Activated CD4-positive, alpha-beta T cell treated with anti-CD3 and anti-CD28 coated beads, Interleukin-2, amount 10 ng/mL, durations not matched to agents 7 days and 5 days (primary cell): ENCODE measurements at regions of chr1 and their contacts with region 1.

Region 1: GRCh38 chr1:151131701-151132334 is 14.6 kb downstream of the SEMA6C start:
- DNase-seq: no peak
- H3K4me3 Mint-ChIP-seq: peak overlapping the region; percentile 60
- H3K27ac Mint-ChIP-seq: peak overlapping the region; percentile 81
- H3K4me1 Mint-ChIP-seq: peaks cover 21% of the 10 kb centered on the region
- H3K27me3 Mint-ChIP-seq: peaks cover 9% of the 10 kb centered on the region

Region 2: GRCh38 chr1:151098126-151098525 is 33.7 kb before region 1 on chr1:
- CTCF ChIA-PET with region 1: interaction called, 11 read pairs
- POLR2A ChIA-PET with region 1: no interaction called
- DNase-seq: no peak
- H3K4me3 Mint-ChIP-seq: no peak overlapping the region
- H3K27ac Mint-ChIP-seq: no peak overlapping the region
- H3K4me1 Mint-ChIP-seq: no peaks in the 10 kb centered on the region
- H3K27me3 Mint-ChIP-seq: no peaks in the 10 kb centered on the region